ENCODE measurements at regions of chr3 and their contacts with region 1.

Region 1: DNA sequence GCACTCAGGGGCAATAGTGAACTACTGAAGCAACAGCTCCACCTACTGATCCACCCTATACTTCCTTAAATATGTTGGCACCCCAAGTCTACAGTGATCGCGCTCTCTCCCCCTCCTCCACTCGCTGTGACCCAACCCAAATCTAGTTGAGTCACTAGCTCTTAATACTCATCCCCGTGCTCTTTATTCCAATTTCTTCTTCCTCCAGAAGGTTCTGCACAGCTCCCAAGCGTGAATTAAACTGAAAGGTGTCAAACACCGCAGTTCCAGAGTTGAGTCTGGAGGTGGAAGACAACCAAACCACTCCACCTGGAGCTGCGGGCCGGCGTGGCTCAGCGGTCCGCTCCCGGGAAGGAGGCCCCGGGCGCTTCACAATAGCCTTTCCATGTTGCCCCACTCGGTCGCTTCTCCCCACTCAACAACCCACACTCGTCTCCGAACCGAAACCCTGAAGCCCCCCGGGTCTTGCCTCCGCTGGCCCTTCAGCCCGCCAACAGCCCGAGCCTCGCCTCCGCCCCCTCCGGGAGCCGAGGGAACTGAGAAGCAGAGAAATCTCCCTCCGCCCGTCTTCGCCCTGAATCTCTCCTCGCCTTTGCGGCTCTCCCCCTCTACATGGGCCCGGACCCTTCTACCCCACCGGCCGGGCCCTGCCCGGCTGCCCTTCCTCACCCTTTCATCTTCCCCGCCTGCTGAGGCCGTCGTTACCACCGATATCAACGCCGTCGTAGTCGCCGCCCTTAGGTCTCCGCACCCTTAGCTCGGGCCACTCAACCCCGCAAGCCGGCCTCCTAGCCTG is 578 bp downstream of the NAA50 start:
- DNase-seq: peak; percentile 59 to 89 (median 83)
- ATAC-seq: peak; percentile 81
- H3K4me3 ChIP-seq: peak overlapping the region; percentile 90
- H3K4me3 Mint-ChIP-seq: peak overlapping the region; percentile 92 to 100 (median 96)
- H3K27ac ChIP-seq: peak overlapping the region; percentile 99
- H3K27ac Mint-ChIP-seq: peak overlapping the region; percentile 96 to 100 (median 100)
- H3K4me1 ChIP-seq: peaks cover 25 to 43% of the 10 kb centered on the region in 2 donors
- H3K4me1 Mint-ChIP-seq: peaks cover 47 to 81% (median 72%) of the 10 kb centered on the region in 7 donors
- H3K27me3 ChIP-seq: no peaks in the 10 kb centered on the region
- H3K27me3 Mint-ChIP-seq: no peaks in the 10 kb centered on the region

Region 2: DNA sequence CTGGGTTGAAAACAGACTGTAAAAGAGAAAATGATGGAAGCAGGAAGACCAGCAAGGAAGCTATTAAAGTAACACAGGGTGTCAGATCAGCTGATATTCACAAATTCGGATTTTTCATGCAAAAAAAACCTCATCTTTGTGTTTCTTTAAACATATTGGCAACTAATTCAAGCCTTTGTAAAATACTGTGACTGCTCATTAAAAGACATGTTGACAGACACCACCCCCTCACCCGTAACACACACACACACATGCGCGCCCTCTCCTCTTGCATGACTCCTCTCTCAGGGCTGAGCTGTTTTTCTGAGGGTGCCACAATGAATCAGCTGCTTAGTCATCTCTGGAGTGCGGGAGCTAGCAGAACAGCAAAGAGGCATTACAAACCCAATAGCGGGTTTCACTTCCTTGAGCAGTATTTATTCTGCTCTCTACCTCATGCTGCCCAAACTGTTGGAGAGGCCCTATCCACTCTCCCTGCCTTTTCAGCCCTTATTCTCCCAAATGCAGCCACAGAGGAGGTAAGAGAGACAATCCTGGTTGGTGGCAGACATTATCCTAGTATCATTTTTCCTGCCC is 1068.7 kb before region 1 on chr3:
- CTCF ChIA-PET with region 1: no interaction called
- POLR2A ChIA-PET with region 1: no interaction called
- intact Hi-C with region 1: loop called in 1 of 2 experiments (anchors 10 kb)
- DNase-seq: peak in 7 of 9 donors; percentile 5 to 76 (median 30)
- ATAC-seq: peak; percentile 94
- H3K4me3 ChIP-seq: no peak overlapping the region
- H3K4me3 Mint-ChIP-seq: peak overlapping the region in 4 of 10 donors; percentile 11 to 80 (median 16)
- H3K27ac ChIP-seq: no peak overlapping the region
- H3K27ac Mint-ChIP-seq: peak overlapping the region in 5 of 9 donors; percentile 20 to 94 (median 24)
- H3K4me1 ChIP-seq: peaks cover 23 to 39% of the 10 kb centered on the region in 2 donors
- H3K4me1 Mint-ChIP-seq: peaks cover 30 to 69% (median 34%) of the 10 kb centered on the region in 7 donors
- H3K27me3 ChIP-seq: no peaks in the 10 kb centered on the region
- H3K27me3 Mint-ChIP-seq: no peaks in the 10 kb centered on the region

Region 3: DNA sequence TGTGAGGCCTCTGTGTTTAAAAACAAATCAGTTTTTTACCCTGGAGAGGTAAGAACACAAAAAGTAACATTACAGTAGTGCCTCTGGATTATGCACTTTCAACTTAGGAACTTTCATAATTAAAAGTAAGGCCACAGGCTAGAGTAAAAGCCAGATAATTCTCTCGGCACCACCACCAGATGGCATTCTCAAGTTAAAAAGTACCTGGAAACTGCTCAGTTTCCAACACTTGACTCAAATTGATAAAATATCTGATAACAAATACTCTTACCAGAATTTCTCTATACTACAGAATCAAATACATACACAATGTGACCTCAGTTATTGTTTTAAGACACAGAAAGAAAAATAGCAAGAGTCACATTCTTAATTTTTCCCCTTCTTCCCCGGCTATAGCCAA is 250.4 kb before region 1 on chr3:
- CTCF ChIA-PET with region 1: interaction called, 21 read pairs
- POLR2A ChIA-PET with region 1: interaction called, 5 read pairs
- intact Hi-C with region 1: loop called (anchors 1 kb)
- DNase-seq: peak in 6 of 9 donors; percentile 22 to 62 (median 42)
- ATAC-seq: peak; percentile 67
- H3K4me3 ChIP-seq: no peak overlapping the region
- H3K4me3 Mint-ChIP-seq: no peak overlapping the region
- H3K27ac ChIP-seq: no peak overlapping the region
- H3K27ac Mint-ChIP-seq: no peak overlapping the region
- H3K4me1 ChIP-seq: no peaks in the 10 kb centered on the region
- H3K4me1 Mint-ChIP-seq: peaks cover 0 to 10% (median under 1%) of the 10 kb centered on the region in 7 donors
- H3K27me3 ChIP-seq: no peaks in the 10 kb centered on the region
- H3K27me3 Mint-ChIP-seq: no peaks in the 10 kb centered on the region

Region 4: GRCh38 chr3:113606539-113607218 is 138.8 kb before region 1 on chr3:
- CTCF ChIA-PET with region 1: no interaction called
- POLR2A ChIA-PET with region 1: no interaction called
- intact Hi-C with region 1: loop called in 1 of 2 experiments (anchors 10 kb)
- DNase-seq: peak in 7 of 9 donors; percentile 32 to 64 (median 58)
- ATAC-seq: peak; percentile 87
- H3K4me3 ChIP-seq: no peak overlapping the region
- H3K4me3 Mint-ChIP-seq: peak overlapping the region; percentile 8 to 77 (median 56)
- H3K27ac ChIP-seq: peak overlapping the region; percentile 0
- H3K27ac Mint-ChIP-seq: peak overlapping the region in 7 of 9 donors; percentile 60 to 83 (median 77)
- H3K4me1 ChIP-seq: peaks cover 12 to 17% of the 10 kb centered on the region in 2 donors
- H3K4me1 Mint-ChIP-seq: peaks cover 21 to 38% (median 34%) of the 10 kb centered on the region in 7 donors
- H3K27me3 ChIP-seq: no peaks in the 10 kb centered on the region
- H3K27me3 Mint-ChIP-seq: no peaks in the 10 kb centered on the region

Region 5: DNA sequence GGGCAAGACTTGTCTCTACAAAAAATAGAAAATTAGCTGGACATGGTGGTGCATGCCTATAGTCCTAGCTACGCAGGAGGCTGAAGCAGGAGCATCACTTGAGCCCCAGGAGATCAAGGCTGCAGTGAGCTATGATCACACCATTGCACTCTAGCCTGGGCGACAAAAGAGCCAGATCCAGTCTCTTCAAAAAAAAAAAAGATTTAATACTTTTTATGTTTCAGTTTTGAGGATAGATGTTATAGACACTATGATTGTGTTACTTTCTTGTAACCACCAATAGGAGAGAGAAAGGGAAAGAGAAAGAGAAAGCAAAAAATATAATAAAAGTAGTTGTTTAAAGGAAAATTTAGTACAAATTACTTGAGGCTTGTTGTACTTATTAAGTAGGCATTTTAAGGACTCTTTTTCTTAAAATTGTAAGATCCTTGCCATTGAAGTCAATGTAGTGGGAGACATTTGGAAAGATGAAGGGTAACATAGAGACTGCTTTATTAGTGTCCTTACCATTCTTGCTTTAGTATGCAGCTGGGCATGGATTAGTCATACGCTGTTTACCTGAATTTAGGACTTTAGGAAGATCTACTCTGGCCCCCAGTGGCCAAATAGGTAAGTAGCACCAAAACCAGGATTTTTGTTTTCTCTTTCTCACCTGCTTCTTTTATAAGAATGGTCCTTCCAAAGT is 167.2 kb after region 1 on chr3:
- CTCF ChIA-PET with region 1: interaction called, 6 read pairs
- POLR2A ChIA-PET with region 1: no interaction called
- intact Hi-C with region 1: loop called (anchors 2 kb)
- DNase-seq: peak in 7 of 9 donors; percentile 18 to 50 (median 36)
- ATAC-seq: peak; percentile 91
- H3K4me3 ChIP-seq: no peak overlapping the region
- H3K4me3 Mint-ChIP-seq: peak overlapping the region in 8 of 10 donors; percentile 29 to 75 (median 64)
- H3K27ac ChIP-seq: no peak overlapping the region
- H3K27ac Mint-ChIP-seq: peak overlapping the region in 6 of 9 donors; percentile 5 to 76 (median 58)
- H3K4me1 ChIP-seq: no peaks in the 10 kb centered on the region
- H3K4me1 Mint-ChIP-seq: peaks cover 0 to 7% (median 5%) of the 10 kb centered on the region in 7 donors
- H3K27me3 ChIP-seq: no peaks in the 10 kb centered on the region
- H3K27me3 Mint-ChIP-seq: peaks cover 0 to 15% (median 0%) of the 10 kb centered on the region in 5 donors

Region 6: DNA sequence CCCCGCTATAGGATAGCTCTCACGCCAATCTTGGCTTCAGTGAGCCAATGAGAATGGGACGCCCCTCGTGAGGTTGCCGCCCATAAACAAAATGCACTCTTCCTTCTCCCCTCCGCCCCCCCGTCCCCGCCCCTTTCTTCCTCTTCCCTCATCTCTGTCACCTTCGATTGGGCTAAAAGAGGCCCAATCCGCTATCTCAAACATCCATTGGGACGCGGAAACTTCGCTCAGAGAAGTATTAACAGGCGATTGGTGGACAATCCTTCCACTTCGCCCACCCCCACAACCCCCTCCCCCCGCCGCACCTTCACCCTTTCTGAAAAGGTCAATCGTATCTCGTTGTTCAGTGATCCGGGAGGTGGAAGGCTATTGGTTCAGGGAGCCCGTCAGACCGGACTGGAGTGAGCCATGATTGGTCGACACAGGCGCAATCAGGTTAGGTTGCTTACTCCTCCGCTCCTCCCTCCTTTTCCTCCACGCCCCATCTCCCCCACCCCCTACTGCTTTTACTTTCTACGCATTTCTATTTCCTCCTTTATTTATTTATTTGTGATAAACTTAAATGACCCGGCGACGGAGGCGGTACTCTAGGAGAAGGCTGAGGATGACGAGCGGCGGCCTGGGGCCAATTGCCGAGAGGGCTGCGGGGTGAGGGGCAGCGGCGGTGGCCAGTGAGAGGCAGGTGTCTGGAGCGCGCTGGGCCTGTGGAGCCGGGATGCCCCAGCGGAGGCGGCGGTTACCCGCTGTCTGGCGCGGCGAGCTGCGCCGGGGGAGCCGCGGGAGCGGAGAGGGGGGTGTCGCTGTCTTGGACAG is 1402.1 kb after region 1 on chr3:
- CTCF ChIA-PET with region 1: no interaction called
- POLR2A ChIA-PET with region 1: interaction called, 11 read pairs
- intact Hi-C with region 1: no loop called
- DNase-seq: peak; percentile 84 to 99 (median 98)
- ATAC-seq: peak; percentile 83
- H3K4me3 ChIP-seq: peak overlapping the region; percentile 65
- H3K4me3 Mint-ChIP-seq: peak overlapping the region; percentile 93 to 100 (median 96)
- H3K27ac ChIP-seq: peak overlapping the region; percentile 98
- H3K27ac Mint-ChIP-seq: peak overlapping the region; percentile 97 to 100 (median 100)
- H3K4me1 ChIP-seq: peaks cover 15 to 18% of the 10 kb centered on the region in 2 donors
- H3K4me1 Mint-ChIP-seq: peaks cover 16 to 45% (median 24%) of the 10 kb centered on the region in 7 donors
- H3K27me3 ChIP-seq: no peaks in the 10 kb centered on the region
- H3K27me3 Mint-ChIP-seq: peaks cover 0 to 8% (median 0%) of the 10 kb centered on the region in 5 donors